K562 (cell line): ENCODE measurements at regions of chr12 and their contacts with region 1.

Region 1: DNA sequence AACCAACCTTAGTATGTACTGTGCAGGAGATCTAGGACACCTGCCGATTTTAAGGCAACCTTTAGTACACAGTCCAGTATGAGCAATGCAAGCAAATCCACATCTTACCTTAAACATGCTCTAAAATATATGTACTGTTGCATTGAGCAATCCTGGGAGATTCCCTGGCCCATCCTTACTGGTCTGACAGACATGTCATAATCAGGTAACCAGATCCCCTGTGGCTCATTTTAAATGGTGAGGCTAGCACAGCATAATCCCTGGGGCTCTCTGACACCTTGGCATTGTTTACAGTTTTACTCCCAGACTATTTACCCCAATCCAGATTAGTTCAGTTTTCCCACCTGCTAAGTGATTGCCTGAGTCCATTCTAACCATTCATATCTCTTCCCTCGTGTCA is 15.1 kb downstream of the BMAL2 start:
- DNase-seq: no peak
- ATAC-seq: no peak
- H3K4me3 ChIP-seq: no peak overlapping the region
- H3K27ac ChIP-seq: no peak overlapping the region
- H3K4me1 ChIP-seq: no peaks in the 10 kb centered on the region
- H3K27me3 ChIP-seq: peaks cover 0 to 3% of the 10 kb centered on the region in 2 experiments; a peak in 1 of 5 replicates
- CTCF ChIP-seq: no peak
- EP300 ChIP-seq: no peak
- POLR2A ChIP-seq: no peak
- RAD21 ChIP-seq: no peak

Region 2: GRCh38 chr12:27383429-27384260 is 35.9 kb after region 1 on chr12:
- CTCF ChIA-PET with region 1: no interaction called
- POLR2A ChIA-PET with region 1: interaction called, 3 read pairs
- in situ Hi-C with region 1: loop called (anchors 5 kb)
- intact Hi-C with region 1: no loop called
- DNase-seq: peak; percentile 70 to 79 (median 73)
- ATAC-seq: peak; percentile 94
- H3K4me3 ChIP-seq: no peak overlapping the region
- H3K27ac ChIP-seq: no peak overlapping the region
- H3K4me1 ChIP-seq: no peaks in the 10 kb centered on the region
- H3K27me3 ChIP-seq: peaks cover 4 to 9% of the 10 kb centered on the region in 2 experiments; a peak in 2 of 5 replicates
- CTCF ChIP-seq: peak; percentile 76 to 89 (median 79)
- EP300 ChIP-seq: no peak
- POLR2A ChIP-seq: no peak
- RAD21 ChIP-seq: peak; percentile 44 to 66